Psoas muscle (tissue), 8 donors: ENCODE measurements at regions of chr4 and their contacts with region 1.

Region 1: DNA sequence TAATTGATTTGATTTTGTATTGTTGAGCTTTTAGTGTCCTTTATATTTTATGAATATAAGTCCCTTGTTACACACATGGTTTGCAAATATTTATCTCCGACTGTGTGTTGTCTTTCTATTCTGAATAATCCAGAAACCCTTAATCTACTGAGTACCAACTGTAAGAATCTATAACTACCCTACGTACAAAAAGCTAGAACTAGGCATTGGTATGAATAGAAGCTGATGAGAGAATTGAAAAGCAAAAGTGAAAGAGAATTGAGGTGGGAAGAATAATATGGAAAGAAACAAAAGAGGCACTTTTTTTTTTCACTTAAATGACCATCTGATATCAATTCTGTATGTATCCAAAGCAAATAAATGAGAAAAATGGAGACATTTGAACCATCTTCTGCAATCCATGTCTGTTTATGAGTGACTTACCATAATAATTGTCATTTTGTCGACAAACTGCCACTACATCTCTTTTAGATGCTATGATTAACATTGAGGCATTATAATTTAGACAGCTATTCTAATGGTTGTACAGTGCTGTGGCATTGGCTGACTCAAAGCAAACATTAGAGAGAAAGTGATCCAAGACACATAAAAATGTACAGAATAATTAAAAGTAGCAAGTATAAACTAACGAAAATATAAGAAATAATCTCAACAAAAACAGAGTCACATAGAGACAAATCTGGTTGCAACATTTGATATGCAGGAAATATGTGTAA is 1516.6 kb upstream of the AGA start:
- DNase-seq: no peak
- ATAC-seq: no peak
- H3K4me3 ChIP-seq: no peak overlapping the region
- H3K27ac ChIP-seq: no peak overlapping the region
- H3K4me1 ChIP-seq: no peaks in the 10 kb centered on the region
- H3K27me3 ChIP-seq: no peaks in the 10 kb centered on the region
- CTCF ChIP-seq: no peak

Region 2: GRCh38 chr4:179709961-179710624 is 751.2 kb after region 1 on chr4:
- intact Hi-C with region 1: loop called in 1 of 2 experiments (anchors 5 kb)
- DNase-seq: no peak
- ATAC-seq: no peak
- H3K4me3 ChIP-seq: no peak overlapping the region
- H3K27ac ChIP-seq: no peak overlapping the region
- H3K4me1 ChIP-seq: no peaks in the 10 kb centered on the region
- H3K27me3 ChIP-seq: no peaks in the 10 kb centered on the region
- CTCF ChIP-seq: no peak